Left colon (tissue), 2 donors: ENCODE measurements at regions of chr4 and their contacts with region 1.

Region 1: GRCh38 chr4:128558896-128559679 is 250.4 kb upstream of the JADE1 start:
- DNase-seq: peak in 1 of 2 donors; percentile 43
- ATAC-seq: no peak

Region 2: GRCh38 chr4:128287871-128288688 is 271.0 kb before region 1 on chr4:
- intact Hi-C with region 1: loop called in 1 of 2 experiments (anchors 10 kb)
- DNase-seq: peak; percentile 100
- ATAC-seq: peak; percentile 79

Region 3: GRCh38 chr4:128727658-128728057 is 168.6 kb after region 1 on chr4:
- intact Hi-C with region 1: no loop called
- DNase-seq: no peak
- ATAC-seq: no peak